Colonic mucosa (tissue), 4 donors: ENCODE measurements at regions of chr15 and their contacts with region 1.

Region 1: GRCh38 chr15:51982013-51982769 is 10.6 kb upstream of the LEO1 start:
- DNase-seq: peak; percentile 45
- H3K4me3 ChIP-seq: no peak overlapping the region
- H3K27ac ChIP-seq: peak overlapping the region; percentile 82
- H3K4me1 ChIP-seq: peaks cover 10% of the 10 kb centered on the region
- H3K27me3 ChIP-seq: no peaks in the 10 kb centered on the region
- CTCF ChIP-seq: peak; percentile 28

Region 2: DNA sequence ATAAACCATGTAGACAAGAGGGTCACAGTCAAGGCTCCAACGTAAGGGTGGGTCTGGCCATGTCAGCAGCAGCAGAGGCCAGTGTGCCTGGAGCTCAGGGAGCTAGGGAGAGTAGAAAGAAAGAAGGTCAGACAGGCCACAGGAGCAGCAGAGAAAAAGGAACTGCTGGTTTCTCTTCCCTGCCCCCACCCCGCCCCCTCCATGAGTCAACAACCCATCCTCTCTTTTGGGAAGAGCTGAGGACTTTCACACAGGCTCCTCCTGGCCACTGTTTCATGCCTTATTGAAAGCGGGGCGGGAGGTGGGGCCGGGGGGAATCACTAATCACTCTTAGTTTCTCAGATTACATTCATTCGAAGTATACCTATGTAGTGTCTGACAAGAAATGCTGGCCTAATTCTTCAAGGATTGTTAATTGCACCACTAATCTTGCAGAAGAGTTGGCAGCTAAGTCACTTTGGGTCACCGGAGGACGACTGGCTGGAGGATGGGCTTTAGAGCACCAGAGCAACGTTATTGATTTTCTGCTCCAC is 310.0 kb before region 1 on chr15:
- intact Hi-C with region 1: no loop called
- DNase-seq: no peak
- H3K4me3 ChIP-seq: no peak overlapping the region
- H3K27ac ChIP-seq: no peak overlapping the region
- H3K4me1 ChIP-seq: no peaks in the 10 kb centered on the region
- H3K27me3 ChIP-seq: no peaks in the 10 kb centered on the region
- CTCF ChIP-seq: no peak

Region 3: DNA sequence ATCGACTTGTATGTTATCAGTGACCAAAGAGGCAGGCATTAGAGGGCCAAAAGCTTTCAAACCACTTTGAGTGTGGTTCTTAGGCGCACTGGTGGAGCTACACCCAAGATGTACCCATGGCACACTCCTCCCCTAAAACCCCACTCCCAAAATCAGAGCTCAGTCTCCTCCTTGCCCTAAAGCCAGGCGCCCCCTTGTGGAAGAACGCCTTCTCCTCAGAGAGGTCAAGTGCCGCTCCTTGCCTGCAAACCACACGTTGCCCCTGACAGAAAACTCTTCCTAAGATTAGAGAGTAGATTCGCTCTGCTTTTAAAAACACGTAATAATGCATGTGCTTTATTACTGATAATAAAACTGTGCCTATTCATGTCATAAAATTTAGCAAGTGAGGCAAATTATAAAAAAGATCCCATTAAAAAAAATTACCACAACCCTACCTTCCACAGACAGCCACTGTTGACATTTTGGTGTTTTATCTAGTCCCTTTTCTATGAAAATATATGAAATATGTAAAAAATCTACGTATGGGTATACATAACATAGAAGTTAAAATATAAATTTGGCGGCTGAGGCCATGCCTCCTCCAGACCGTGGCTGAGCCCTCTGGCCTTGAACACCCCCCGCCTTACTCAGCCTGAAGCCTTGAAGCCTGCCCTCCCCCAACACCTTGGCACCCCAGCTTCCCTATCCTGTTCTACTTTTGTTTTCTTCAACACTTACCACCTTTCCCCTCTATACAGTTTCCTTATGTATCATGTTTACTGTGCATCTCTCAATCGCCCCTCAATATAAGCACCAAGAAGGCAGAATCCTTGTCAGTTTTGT is 96.9 kb after region 1 on chr15:
- intact Hi-C with region 1: loop called (anchors 2 kb)
- DNase-seq: peak; percentile 93
- H3K4me3 ChIP-seq: no peak overlapping the region
- H3K27ac ChIP-seq: no peak overlapping the region
- H3K4me1 ChIP-seq: no peaks in the 10 kb centered on the region
- H3K27me3 ChIP-seq: no peaks in the 10 kb centered on the region
- CTCF ChIP-seq: peak; percentile 83

Region 4: GRCh38 chr15:52143862-52144261 is 161.7 kb after region 1 on chr15:
- intact Hi-C with region 1: loop called (anchors 2 kb)
- DNase-seq: no peak
- H3K4me3 ChIP-seq: no peak overlapping the region
- H3K27ac ChIP-seq: no peak overlapping the region
- H3K4me1 ChIP-seq: no peaks in the 10 kb centered on the region
- H3K27me3 ChIP-seq: no peaks in the 10 kb centered on the region
- CTCF ChIP-seq: no peak